WTC11 (cell line): ENCODE measurements at regions of chr10 and their contacts with region 1.

Region 1: GRCh38 chr10:58531084-58531695 is 18.5 kb downstream of the BICC1 start:
- DNase-seq: peak; percentile 69
- ATAC-seq: peak; percentile 98
- H3K4me3 Mint-ChIP-seq: no peak overlapping the region
- H3K27ac Mint-ChIP-seq: no peak overlapping the region
- H3K4me1 Mint-ChIP-seq: no peaks in the 10 kb centered on the region
- H3K27me3 Mint-ChIP-seq: no peaks in the 10 kb centered on the region
- CTCF ChIP-seq: peak; percentile 83

Region 2: DNA sequence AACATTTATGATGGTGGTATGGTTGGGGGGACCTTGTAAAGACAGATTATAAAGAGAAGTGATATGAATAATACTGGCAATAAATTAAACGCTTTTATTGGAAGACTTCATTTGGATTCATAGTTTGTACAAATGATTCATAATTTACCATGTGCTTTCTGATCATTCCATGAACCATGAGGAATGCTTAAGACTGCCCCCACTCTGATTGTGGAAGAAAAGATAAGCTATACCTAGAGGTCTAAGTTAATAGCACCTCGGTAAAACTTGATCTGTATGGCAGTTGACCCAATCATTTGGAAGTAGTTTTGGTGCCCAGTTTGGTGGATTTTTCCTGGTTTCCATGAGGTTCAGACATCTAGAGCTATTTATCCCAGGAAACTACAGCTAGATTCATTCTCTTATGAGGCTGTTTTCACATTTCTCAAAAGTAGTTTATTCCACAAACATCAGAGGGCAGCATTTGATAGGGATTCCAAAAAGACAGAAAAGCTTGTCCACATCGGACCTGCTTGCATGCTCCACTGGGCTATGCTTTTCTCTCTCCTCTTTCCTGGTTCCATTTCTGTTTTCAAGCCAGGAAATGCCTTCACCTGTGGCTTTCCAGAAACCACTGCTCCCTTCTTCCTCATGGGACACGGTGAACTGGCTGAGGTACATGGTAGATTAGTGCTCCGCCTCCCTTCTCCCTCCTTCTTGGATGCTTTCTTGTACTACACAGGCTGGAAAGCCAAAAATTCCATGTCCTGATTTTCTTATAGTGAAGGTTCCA is 116.7 kb before region 1 on chr10:
- CTCF ChIA-PET with region 1: interaction called, 32 read pairs
- POLR2A ChIA-PET with region 1: no interaction called
- DNase-seq: no peak
- ATAC-seq: peak; percentile 47
- H3K4me3 Mint-ChIP-seq: no peak overlapping the region
- H3K27ac Mint-ChIP-seq: no peak overlapping the region
- H3K4me1 Mint-ChIP-seq: peaks cover 21% of the 10 kb centered on the region
- H3K27me3 Mint-ChIP-seq: no peaks in the 10 kb centered on the region
- CTCF ChIP-seq: no peak

Region 3: GRCh38 chr10:58465629-58466028 is 65.6 kb before region 1 on chr10:
- CTCF ChIA-PET with region 1: interaction called, 10 read pairs
- POLR2A ChIA-PET with region 1: no interaction called
- DNase-seq: no peak
- ATAC-seq: no peak
- H3K4me3 Mint-ChIP-seq: no peak overlapping the region
- H3K27ac Mint-ChIP-seq: no peak overlapping the region
- H3K4me1 Mint-ChIP-seq: peaks cover 6% of the 10 kb centered on the region; the same call in 1 of the 2 replicates
- H3K27me3 Mint-ChIP-seq: no peaks in the 10 kb centered on the region; the same call in 1 of the 2 replicates
- CTCF ChIP-seq: no peak

Region 4: DNA sequence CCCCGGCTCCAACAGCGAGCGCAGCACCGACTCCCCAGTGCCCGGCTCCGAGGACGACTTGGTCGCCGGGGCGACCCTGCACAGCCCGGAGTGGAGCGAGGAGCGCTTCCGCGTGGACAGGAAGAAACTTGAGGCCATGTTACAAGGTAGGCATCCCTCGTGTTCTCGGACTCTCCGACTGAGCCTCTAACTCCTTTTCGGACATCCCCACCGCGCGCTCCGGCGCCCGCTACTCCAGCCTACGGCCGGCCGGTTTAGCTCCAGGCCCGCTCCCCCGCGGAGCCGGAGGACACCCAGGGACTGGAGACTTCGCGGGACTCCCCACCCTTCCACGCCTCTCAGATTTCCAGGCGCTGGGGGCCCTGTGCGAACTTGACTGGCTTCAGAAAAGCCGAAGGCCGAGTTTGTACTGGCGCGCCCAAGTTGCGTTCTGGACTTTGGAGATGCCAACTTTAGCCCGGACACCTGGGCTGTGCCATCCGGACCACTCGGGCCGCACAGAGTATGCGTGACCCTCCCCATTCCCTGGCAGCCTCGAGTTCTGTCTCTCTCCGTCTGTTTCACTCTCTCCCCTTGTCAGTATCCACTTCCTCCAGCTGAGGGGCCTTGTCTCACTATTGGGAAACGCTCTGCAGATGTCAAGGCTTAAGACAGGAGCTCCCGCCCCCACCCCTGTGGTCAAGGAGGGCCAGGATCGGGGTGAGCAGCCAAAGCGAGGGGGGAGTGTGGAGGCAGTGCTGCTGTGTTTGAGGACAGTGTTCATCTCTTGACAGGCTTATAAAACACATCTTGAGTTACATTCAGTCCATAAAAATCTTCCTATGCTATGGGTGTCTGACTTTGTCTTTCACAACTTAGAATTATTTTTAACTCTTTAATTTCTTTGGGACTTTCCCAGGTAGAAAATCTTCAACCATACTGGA is 17.7 kb before region 1 on chr10:
- CTCF ChIA-PET with region 1: interaction called, 10 read pairs
- POLR2A ChIA-PET with region 1: no interaction called
- DNase-seq: peak; percentile 41
- ATAC-seq: peak; percentile 51
- H3K4me3 Mint-ChIP-seq: peak overlapping the region; percentile 76
- H3K27ac Mint-ChIP-seq: no peak overlapping the region
- H3K4me1 Mint-ChIP-seq: peaks cover 11% of the 10 kb centered on the region
- H3K27me3 Mint-ChIP-seq: peaks cover 23% of the 10 kb centered on the region
- CTCF ChIP-seq: no peak

Region 5: DNA sequence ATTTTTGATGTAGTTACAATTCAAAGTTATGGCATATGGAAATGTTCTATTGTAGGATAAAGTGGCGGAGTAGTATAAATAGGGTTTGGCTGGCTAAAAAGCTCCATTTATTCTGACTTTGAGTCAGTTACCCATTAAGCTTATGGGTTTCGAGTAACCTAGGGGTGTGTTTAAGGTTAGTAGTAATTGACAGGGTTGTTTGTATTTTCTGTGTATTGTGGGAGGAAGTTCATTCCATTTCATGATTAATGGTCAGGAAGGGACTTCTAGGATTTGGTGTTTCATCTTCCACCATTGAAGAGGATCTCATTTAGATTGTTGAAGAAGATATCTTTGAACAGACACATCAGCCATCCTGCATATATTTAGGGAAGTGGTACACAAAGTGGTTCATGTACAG is 56.5 kb after region 1 on chr10:
- CTCF ChIA-PET with region 1: interaction called, 10 read pairs
- POLR2A ChIA-PET with region 1: no interaction called
- DNase-seq: no peak
- ATAC-seq: no peak
- H3K4me3 Mint-ChIP-seq: no peak overlapping the region
- H3K27ac Mint-ChIP-seq: no peak overlapping the region
- H3K4me1 Mint-ChIP-seq: peaks cover 7% of the 10 kb centered on the region
- H3K27me3 Mint-ChIP-seq: no peaks in the 10 kb centered on the region; the same call in 1 of the 2 replicates
- CTCF ChIP-seq: no peak

Region 6: GRCh38 chr10:58641095-58641531 is 109.9 kb after region 1 on chr10:
- CTCF ChIA-PET with region 1: interaction called, 19 read pairs
- POLR2A ChIA-PET with region 1: interaction called, 3 read pairs
- DNase-seq: no peak
- ATAC-seq: peak; percentile 43
- H3K4me3 Mint-ChIP-seq: no peak overlapping the region
- H3K27ac Mint-ChIP-seq: 0 out of 2 replicates have a peak overlapping the region, but pooled peaks have one; percentile 59
- H3K4me1 Mint-ChIP-seq: peaks cover 25% of the 10 kb centered on the region
- H3K27me3 Mint-ChIP-seq: no peaks in the 10 kb centered on the region; the same call in 1 of the 2 replicates
- CTCF ChIP-seq: no peak

Region 7: GRCh38 chr10:58674251-58674650 is 143.1 kb after region 1 on chr10:
- CTCF ChIA-PET with region 1: no interaction called
- POLR2A ChIA-PET with region 1: no interaction called
- DNase-seq: no peak
- ATAC-seq: no peak
- H3K4me3 Mint-ChIP-seq: no peak overlapping the region
- H3K27ac Mint-ChIP-seq: no peak overlapping the region
- H3K4me1 Mint-ChIP-seq: peaks cover 4% of the 10 kb centered on the region; the same call in 1 of the 2 replicates
- H3K27me3 Mint-ChIP-seq: no peaks in the 10 kb centered on the region
- CTCF ChIP-seq: no peak